Psoas muscle (tissue), 8 donors: ENCODE measurements at regions of chr22 and their contacts with region 1.

Region 1: DNA sequence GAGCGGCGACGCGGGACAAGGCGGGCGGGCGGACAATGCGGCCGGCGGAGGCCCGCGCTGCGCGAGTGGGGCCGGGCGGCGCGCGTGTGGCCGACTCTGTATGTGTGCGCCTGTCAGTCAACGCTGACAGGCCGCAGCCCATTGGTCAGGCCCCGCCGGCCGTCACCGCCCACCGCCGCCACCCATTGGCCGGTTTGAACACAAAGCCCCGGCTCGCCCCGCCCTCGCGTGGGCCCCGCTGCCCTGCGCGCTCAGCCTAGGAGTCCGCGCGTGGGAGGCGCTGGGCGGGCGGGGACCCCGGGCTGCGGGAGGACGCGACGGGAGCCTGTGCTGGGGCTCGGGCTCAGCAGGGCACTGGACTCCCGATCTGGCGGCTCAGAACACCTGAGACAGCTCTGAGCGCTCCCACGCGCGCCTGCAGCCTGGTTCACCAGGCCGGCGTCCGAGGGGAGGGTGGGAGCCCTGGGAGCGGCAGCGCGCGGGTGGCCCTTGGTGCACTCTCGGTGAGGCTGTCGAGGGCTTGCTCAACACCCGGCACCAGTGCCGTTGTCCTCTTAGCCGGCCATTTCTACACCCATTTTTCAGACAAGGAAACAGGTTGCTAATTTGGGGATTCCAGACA is at the start of gene SUN2:
- DNase-seq: peak; percentile 95 to 97
- ATAC-seq: peak; percentile 72 to 76 (median 74)
- H3K4me3 ChIP-seq: peak within 1 kb of the TSS; percentile 77
- H3K27ac ChIP-seq: peak within 1 kb of the TSS; percentile 97
- H3K4me1 ChIP-seq: peaks cover 37% of the 10 kb centered on the region
- H3K27me3 ChIP-seq: no peaks in the 10 kb centered on the region
- CTCF ChIP-seq: no peak
- total RNA-seq, gene SUN2: 57.6 to 152 (median 106) TPM

Region 2: GRCh38 chr22:38569972-38570778 is 185.8 kb before region 1 on chr22 and contains the start of gene DMC1:
- intact Hi-C with region 1: no loop called
- DNase-seq: peak; percentile 94 to 96
- ATAC-seq: peak; percentile 96 to 98 (median 97)
- H3K4me3 ChIP-seq: peak within 1 kb of the TSS; percentile 78
- H3K27ac ChIP-seq: peak within 1 kb of the TSS; percentile 61
- H3K4me1 ChIP-seq: peaks cover 9% of the 10 kb centered on the region
- H3K27me3 ChIP-seq: no peaks in the 10 kb centered on the region
- CTCF ChIP-seq: no peak
- total RNA-seq, gene DMC1: 0.22 to 0.54 (median 0.43) TPM

Region 3: DNA sequence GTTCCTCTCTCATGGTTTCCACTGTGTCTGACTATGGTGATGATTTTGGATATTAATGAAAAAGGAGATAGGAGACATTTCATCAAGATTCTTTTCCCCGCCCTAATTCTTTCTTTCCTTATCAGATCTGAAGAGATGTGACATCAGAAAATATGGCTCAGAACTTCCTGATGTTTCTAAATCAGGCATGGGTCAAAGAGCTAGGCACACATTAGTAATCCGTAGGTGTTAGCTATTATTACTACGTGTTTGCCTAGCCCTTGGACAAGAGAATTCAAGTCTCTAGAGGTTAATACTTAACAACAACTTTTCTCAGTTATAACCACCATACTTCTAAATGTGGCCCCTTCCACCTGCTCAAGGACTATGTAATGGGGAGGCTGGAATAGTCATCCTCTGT is 61.1 kb before region 1 on chr22:
- intact Hi-C with region 1: no loop called
- DNase-seq: no peak
- ATAC-seq: no peak
- H3K4me3 ChIP-seq: no peak overlapping the region
- H3K27ac ChIP-seq: no peak overlapping the region
- H3K4me1 ChIP-seq: peaks cover 37% of the 10 kb centered on the region
- H3K27me3 ChIP-seq: no peaks in the 10 kb centered on the region
- CTCF ChIP-seq: no peak

Region 4: DNA sequence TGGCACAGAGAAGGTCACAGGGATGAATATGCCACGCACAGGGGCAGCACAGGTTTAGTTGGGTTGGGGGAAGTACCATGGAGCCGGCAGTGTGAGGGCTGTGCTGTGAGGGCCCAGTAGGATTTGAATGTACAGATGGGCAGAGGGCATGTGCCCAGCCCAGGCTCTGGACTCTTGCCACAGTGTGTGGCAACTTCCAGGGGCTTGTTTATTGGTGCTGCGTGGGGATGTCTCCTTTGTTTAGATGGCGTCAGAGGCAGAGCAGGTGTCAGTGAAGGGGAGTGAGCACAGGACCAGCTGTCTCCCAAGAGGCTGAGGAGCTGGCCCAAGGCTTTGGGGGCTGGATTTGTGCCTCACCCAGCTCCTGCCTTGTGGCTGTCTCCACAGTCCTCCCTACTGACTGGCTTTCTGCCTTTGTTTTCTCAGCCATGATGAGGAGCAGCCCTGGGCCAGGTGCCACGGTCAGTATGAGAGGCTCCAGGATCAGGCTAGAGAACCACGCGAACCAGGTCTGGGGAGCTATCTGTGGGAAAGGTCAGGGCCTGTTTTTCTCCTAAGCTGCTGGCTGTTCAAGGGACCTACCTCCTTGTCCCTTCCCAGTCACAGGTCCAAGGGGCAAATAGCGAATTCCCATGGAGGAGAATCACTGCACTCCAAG is 22.2 kb before region 1 on chr22:
- intact Hi-C with region 1: loop called in 1 of 2 experiments (anchors 2 kb)
- DNase-seq: peak; percentile 82 to 94
- ATAC-seq: peak; percentile 82 to 86 (median 84)
- H3K4me3 ChIP-seq: no peak overlapping the region
- H3K27ac ChIP-seq: peak overlapping the region; percentile 79
- H3K4me1 ChIP-seq: peaks cover 41% of the 10 kb centered on the region
- H3K27me3 ChIP-seq: no peaks in the 10 kb centered on the region
- CTCF ChIP-seq: no peak

Region 5: GRCh38 chr22:38793721-38794466 is 37.9 kb after region 1 on chr22 and contains the start of gene DNAL4:
- intact Hi-C with region 1: no loop called
- DNase-seq: peak; percentile 93 to 96
- ATAC-seq: peak; percentile 98
- H3K4me3 ChIP-seq: peak within 1 kb of the TSS; percentile 79
- H3K27ac ChIP-seq: peak within 1 kb of the TSS; percentile 73
- H3K4me1 ChIP-seq: peaks cover 2% of the 10 kb centered on the region
- H3K27me3 ChIP-seq: peaks cover 0 to 13% (median 4%) of the 10 kb centered on the region in 3 donors
- CTCF ChIP-seq: no peak
- total RNA-seq, gene DNAL4: 3.5 to 6.4 (median 4.7) TPM